Endothelial cell of umbilical vein (primary cell): ENCODE measurements at regions of chr5 and their contacts with region 1.

Region 1: DNA sequence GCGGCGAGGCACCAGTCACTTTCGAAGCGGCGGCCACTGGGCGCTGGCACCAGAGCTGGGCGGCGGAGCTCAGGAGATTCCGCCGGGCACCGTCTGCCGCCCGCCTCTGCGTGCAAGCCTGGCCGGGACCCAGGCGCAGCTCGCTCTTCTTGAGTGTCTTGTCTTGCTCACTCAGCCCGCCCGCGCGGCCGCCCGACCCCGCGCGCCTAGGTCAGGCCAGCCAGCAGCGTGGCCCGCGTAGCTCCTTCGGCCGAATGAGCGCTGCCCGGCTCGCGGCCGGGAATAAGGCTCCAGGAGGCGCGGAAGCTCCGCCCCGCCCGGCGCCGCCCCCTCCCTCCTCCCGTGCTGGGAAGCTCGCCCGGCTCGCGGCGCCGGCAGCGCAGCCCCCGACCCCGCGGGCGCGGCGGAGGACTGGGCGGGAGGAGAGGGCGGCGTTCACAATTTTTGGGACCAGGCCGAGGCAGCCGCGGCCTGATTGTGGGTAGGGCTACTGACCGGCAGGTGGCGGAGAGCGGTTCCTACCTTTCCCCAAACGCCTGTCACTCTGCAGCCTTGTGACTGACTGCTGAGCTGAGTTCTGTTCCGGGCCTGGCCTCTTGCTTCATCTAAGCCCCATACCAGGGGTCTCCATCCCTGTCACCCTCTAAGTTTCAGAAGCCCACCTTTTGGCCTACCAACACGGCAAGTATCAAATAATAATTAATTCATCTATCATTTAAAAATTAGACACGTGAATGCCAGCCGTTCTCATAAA is at the start of gene HBEGF:
- DNase-seq: peak; percentile 84
- H3K4me3 ChIP-seq: peak within 1 kb of the TSS; percentile 72 to 86 (median 81)
- H3K27ac ChIP-seq: peak within 1 kb of the TSS; percentile 81
- H3K4me1 ChIP-seq: peaks cover 55% of the 10 kb centered on the region
- H3K27me3 ChIP-seq: no peaks in the 10 kb centered on the region
- CTCF ChIP-seq: peak; percentile 21 to 41
- POLR2A ChIP-seq: peak; percentile 98
- total RNA-seq, gene HBEGF: 33.2 and 35.3 TPM in 2 replicates

Region 2: GRCh38 chr5:139120521-139120920 is 1226.0 kb before region 1 on chr5:
- CTCF ChIA-PET with region 1: no interaction called
- POLR2A ChIA-PET with region 1: no interaction called
- dilution Hi-C with region 1: no loop called
- intact Hi-C with region 1: no loop called
- DNase-seq: no peak
- H3K4me3 ChIP-seq: no peak overlapping the region
- H3K27ac ChIP-seq: no peak overlapping the region
- H3K4me1 ChIP-seq: no peaks in the 10 kb centered on the region
- H3K27me3 ChIP-seq: no peaks in the 10 kb centered on the region
- CTCF ChIP-seq: no peak
- POLR2A ChIP-seq: no peak

Region 3: DNA sequence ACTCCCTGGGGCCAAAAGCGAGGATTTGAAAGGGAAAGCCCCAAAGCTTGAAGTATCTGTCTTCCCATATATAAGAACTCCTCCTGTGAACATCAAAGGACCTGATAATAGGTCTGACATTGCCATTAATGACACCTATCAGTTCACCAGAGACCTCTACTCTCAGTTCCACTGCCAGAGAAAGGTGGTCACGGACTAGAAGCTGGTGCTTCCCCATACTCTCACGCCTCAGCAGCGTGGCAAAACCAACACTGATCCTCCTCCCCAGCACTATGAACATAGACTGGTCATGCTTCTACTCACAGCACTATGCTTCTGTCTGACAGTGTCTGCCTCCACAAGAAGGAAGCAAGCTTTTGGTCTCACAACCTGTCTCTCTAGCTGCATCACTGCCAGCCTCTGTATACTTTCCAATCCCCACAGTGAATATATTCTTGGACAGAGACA is 341.4 kb before region 1 on chr5:
- CTCF ChIA-PET with region 1: no interaction called
- POLR2A ChIA-PET with region 1: no interaction called
- dilution Hi-C with region 1: no loop called
- intact Hi-C with region 1: no loop called
- DNase-seq: no peak
- H3K4me3 ChIP-seq: no peak overlapping the region
- H3K27ac ChIP-seq: no peak overlapping the region
- H3K4me1 ChIP-seq: no peaks in the 10 kb centered on the region
- H3K27me3 ChIP-seq: peaks cover 29 to 58% of the 10 kb centered on the region in 2 experiments
- CTCF ChIP-seq: no peak
- POLR2A ChIP-seq: no peak

Region 4: GRCh38 chr5:140261403-140262171 is 84.9 kb before region 1 on chr5:
- CTCF ChIA-PET with region 1: interaction called, 58 read pairs
- POLR2A ChIA-PET with region 1: interaction called, 18 read pairs
- dilution Hi-C with region 1: no loop called
- intact Hi-C with region 1: loop called (anchors 1 kb)
- DNase-seq: peak; percentile 97
- H3K4me3 ChIP-seq: peak overlapping the region in 1 of 3 experiments; percentile 23
- H3K27ac ChIP-seq: peak overlapping the region; percentile 84
- H3K4me1 ChIP-seq: peaks cover 30% of the 10 kb centered on the region
- H3K27me3 ChIP-seq: no peaks in the 10 kb centered on the region
- CTCF ChIP-seq: no peak
- POLR2A ChIP-seq: peak; percentile 53

Region 5: GRCh38 chr5:140284013-140284412 is 62.5 kb before region 1 on chr5:
- CTCF ChIA-PET with region 1: interaction called, 11 read pairs
- POLR2A ChIA-PET with region 1: no interaction called
- dilution Hi-C with region 1: no loop called
- intact Hi-C with region 1: no loop called
- DNase-seq: no peak
- H3K4me3 ChIP-seq: no peak overlapping the region
- H3K27ac ChIP-seq: no peak overlapping the region
- H3K4me1 ChIP-seq: peaks cover 4% of the 10 kb centered on the region
- H3K27me3 ChIP-seq: no peaks in the 10 kb centered on the region
- CTCF ChIP-seq: no peak
- POLR2A ChIP-seq: no peak

Region 6: DNA sequence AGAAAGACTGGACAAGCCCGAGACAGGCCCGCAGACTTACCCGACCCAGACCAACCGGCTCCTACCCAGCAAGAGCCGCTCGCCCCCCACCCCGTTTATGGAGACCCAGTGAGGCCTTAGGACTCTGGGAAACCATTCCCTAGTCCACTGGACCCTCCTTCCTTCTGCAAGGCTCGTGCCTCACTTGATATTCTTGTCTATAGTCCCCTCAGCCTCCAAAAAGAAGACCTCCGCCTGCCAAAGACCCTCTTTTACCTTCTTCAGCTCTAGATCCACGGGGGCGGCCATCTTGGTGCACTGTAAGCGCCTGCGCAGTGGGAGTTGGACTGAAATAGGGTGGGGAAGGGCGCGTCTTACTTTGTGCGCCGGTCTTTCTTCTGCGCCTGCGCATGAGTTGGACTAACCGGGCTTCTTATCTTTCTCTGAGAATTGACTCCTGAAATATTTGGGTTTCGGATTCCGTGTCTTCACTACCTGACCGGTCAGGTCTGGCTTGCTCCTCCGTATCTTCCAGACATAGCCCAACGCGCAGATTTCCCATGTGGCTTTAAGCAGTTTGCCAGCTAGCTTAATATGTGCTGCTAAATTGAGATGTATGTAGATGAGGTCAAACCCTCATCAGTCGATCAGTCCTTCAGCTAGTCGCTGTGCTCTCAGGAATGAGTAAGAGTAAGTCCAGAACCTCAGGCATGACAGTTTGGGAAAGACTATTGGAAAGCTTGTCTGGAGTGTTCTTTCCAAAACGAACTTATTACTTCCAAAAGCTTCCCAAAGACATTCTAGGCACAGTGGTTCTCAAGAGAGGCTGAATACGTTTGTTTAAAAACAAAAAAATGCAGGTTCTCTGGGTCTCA is 43.5 kb before region 1 on chr5 and contains the start of gene PFDN1:
- CTCF ChIA-PET with region 1: interaction called, 20 read pairs
- POLR2A ChIA-PET with region 1: interaction called, 18 read pairs
- dilution Hi-C with region 1: no loop called
- intact Hi-C with region 1: loop called (anchors 1 kb)
- DNase-seq: peak; percentile 96
- H3K4me3 ChIP-seq: peak within 1 kb of the TSS; percentile 95 to 98 (median 95)
- H3K27ac ChIP-seq: peak within 1 kb of the TSS; percentile 85
- H3K4me1 ChIP-seq: peaks cover 23% of the 10 kb centered on the region
- H3K27me3 ChIP-seq: no peaks in the 10 kb centered on the region
- CTCF ChIP-seq: no peak
- POLR2A ChIP-seq: peak; percentile 81
- total RNA-seq, gene PFDN1: 107 and 108 TPM in 2 replicates

Region 7: DNA sequence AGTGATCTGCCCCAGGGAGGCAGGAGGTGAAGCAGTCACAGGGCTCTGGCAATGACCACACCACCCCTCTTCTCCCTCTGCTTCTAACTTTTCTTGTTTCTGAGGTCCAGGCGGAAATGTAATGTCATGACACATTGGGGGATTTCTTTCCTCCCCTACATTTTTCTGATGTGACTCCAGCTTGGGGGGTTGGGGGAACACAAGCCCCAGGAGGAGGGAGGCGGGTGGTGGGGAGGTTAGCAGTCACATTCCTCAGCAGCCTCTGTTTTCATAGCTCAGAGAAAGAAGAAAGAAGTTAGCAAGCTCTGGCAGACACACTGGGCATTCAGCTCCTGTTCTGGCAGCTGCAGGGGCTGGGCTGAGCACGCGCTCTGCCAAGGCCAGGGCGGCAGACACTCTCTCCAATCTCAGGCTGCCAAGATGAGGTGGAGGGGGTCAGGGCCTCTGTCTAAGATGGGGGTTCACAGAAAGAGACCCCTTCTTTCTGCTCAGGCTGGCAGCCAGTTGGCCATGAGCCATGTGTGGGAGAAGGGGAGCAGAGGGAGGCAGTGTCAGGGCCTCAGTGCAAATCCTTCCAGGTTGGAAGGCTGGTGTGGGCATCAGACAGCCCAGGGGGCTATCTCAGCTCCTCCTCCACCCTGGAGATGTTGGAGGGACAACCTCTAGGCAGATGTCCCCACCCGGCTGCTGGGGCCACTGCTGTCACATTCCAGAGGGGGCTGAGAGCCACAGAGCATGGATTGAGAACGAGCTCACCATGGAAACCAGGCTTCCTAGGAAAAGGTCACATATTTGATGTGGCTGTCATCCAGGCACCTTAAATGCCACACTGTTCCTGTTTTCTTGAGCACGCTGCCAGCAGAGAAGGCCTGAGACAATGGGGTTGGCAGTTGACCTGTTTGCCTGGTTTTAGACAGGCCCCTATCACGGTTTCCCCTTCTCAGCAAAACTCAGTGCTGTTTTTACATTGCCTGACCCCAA is 23.5 kb before region 1 on chr5:
- CTCF ChIA-PET with region 1: interaction called, 43 read pairs
- POLR2A ChIA-PET with region 1: interaction called, 24 read pairs
- dilution Hi-C with region 1: no loop called
- intact Hi-C with region 1: loop called (anchors 1 kb)
- DNase-seq: peak; percentile 94
- H3K4me3 ChIP-seq: no peak overlapping the region
- H3K27ac ChIP-seq: peak overlapping the region; percentile 99
- H3K4me1 ChIP-seq: peaks cover 55% of the 10 kb centered on the region
- H3K27me3 ChIP-seq: no peaks in the 10 kb centered on the region
- CTCF ChIP-seq: no peak
- POLR2A ChIP-seq: no peak

Region 8: GRCh38 chr5:140357726-140358093 is 11.2 kb after region 1 on chr5:
- CTCF ChIA-PET with region 1: interaction called, 19 read pairs
- POLR2A ChIA-PET with region 1: interaction called, 6 read pairs
- dilution Hi-C with region 1: no loop called
- intact Hi-C with region 1: no loop called
- DNase-seq: peak; percentile 88
- H3K4me3 ChIP-seq: no peak overlapping the region
- H3K27ac ChIP-seq: no peak overlapping the region
- H3K4me1 ChIP-seq: no peaks in the 10 kb centered on the region
- H3K27me3 ChIP-seq: no peaks in the 10 kb centered on the region
- CTCF ChIP-seq: peak; percentile 94 to 97
- POLR2A ChIP-seq: no peak

Region 9: DNA sequence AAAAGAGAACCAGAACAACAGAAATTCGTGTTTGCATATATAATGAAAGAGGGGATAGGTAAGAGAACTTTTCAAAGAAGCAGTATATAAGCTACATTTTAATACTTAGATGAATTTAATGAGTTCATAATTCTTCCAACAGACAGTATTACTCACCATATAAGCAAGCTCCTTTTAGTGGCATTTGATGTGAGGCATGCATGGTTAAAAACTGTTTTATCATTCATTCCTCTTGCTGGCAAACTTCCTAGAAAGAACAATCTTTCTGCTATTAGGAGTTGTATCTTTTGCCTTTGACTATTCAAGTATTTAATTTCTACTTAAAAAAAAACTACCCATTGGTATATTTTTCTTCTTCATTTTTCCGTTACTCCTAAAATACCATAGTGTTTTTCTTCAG is 135.2 kb after region 1 on chr5:
- CTCF ChIA-PET with region 1: no interaction called
- POLR2A ChIA-PET with region 1: no interaction called
- dilution Hi-C with region 1: no loop called
- intact Hi-C with region 1: no loop called
- DNase-seq: no peak
- H3K4me3 ChIP-seq: no peak overlapping the region
- H3K27ac ChIP-seq: no peak overlapping the region
- H3K4me1 ChIP-seq: peaks cover 26% of the 10 kb centered on the region
- H3K27me3 ChIP-seq: no peaks in the 10 kb centered on the region
- CTCF ChIP-seq: no peak
- POLR2A ChIP-seq: no peak